Heart left ventricle (tissue), 16 donors: ENCODE measurements at regions of chrX and their contacts with region 1.

Region 1: GRCh38 chrX:2342874-2343273 is 157.9 kb downstream of the DHRSX start:
- DNase-seq: no peak
- ATAC-seq: peak in 2 of 4 donors; percentile 8 to 14
- H3K4me3 ChIP-seq: no peak overlapping the region
- H3K27ac ChIP-seq: peak overlapping the region; percentile 60 to 95 (median 81)
- H3K4me1 ChIP-seq: peaks cover 0 to 23% (median 8%) of the 10 kb centered on the region in 12 donors
- H3K27me3 ChIP-seq: no peaks in the 10 kb centered on the region
- CTCF ChIP-seq: no peak
- POLR2A ChIP-seq: no peak

Region 2: GRCh38 chrX:1598021-1598873 is 744.6 kb before region 1 on chrX:
- intact Hi-C with region 1: no loop called
- DNase-seq: no peak
- ATAC-seq: peak in 2 of 4 donors; percentile 15 to 34
- H3K4me3 ChIP-seq: peak overlapping the region in 1 of 12 donors; percentile 5
- H3K27ac ChIP-seq: no peak overlapping the region
- H3K4me1 ChIP-seq: peaks cover 0 to 16% (median 11%) of the 10 kb centered on the region in 12 donors
- H3K27me3 ChIP-seq: no peaks in the 10 kb centered on the region
- CTCF ChIP-seq: no peak
- POLR2A ChIP-seq: no peak

Region 3: GRCh38 chrX:2162695-2163094 is 180.2 kb before region 1 on chrX:
- intact Hi-C with region 1: no loop called
- DNase-seq: no peak
- ATAC-seq: no peak
- H3K4me3 ChIP-seq: no peak overlapping the region
- H3K27ac ChIP-seq: no peak overlapping the region
- H3K4me1 ChIP-seq: no peaks in the 10 kb centered on the region
- H3K27me3 ChIP-seq: no peaks in the 10 kb centered on the region
- CTCF ChIP-seq: no peak
- POLR2A ChIP-seq: no peak

Region 4: GRCh38 chrX:2283111-2284067 is 59.5 kb before region 1 on chrX:
- intact Hi-C with region 1: no loop called
- DNase-seq: no peak
- ATAC-seq: no peak
- H3K4me3 ChIP-seq: no peak overlapping the region
- H3K27ac ChIP-seq: no peak overlapping the region
- H3K4me1 ChIP-seq: no peaks in the 10 kb centered on the region
- H3K27me3 ChIP-seq: no peaks in the 10 kb centered on the region
- CTCF ChIP-seq: no peak
- POLR2A ChIP-seq: no peak

Region 5: DNA sequence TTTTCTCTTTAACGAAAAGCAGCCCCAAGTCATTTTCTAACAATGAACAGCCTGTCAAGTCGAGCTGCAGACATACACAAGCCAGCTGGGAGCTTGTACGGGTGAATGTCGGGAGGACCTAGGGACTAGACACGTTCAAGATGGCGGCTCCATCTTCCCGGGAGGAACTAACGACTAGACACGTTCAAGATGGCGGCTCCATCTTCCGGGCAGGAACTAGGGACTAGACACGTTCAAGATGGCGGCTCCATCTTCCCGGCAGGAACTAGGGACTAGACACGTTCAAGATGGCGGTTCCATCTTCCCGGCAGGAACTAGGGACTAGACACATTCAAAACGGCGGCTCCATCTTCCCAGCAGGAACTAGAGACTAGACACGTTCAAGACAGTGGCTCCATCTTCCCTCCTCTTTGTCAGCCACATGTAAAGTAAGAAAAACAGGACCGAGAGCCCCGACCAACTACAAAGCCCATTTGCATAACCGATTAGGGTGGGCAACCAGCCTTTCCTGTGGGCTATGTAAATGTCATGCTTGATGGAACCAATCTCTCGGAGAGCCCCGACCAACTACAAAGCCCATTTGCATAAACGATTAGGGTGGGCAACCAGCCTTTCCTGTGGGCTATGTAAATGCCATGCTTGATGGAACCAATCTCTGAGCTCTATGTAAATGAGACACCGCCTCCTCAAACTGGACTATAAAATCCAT is 17.6 kb before region 1 on chrX:
- intact Hi-C with region 1: loop called in 2 of 10 experiments (anchors 1 to 2 kb)
- DNase-seq: peak; percentile 32 to 91 (median 64)
- ATAC-seq: peak; percentile 28 to 65 (median 49)
- H3K4me3 ChIP-seq: peak overlapping the region in 11 of 12 donors; percentile 10 to 58 (median 36)
- H3K27ac ChIP-seq: peak overlapping the region in 8 of 12 donors; percentile 1 to 84 (median 53)
- H3K4me1 ChIP-seq: peaks cover 0 to 14% (median 0%) of the 10 kb centered on the region in 12 donors
- H3K27me3 ChIP-seq: no peaks in the 10 kb centered on the region
- CTCF ChIP-seq: no peak
- POLR2A ChIP-seq: no peak

Region 6: DNA sequence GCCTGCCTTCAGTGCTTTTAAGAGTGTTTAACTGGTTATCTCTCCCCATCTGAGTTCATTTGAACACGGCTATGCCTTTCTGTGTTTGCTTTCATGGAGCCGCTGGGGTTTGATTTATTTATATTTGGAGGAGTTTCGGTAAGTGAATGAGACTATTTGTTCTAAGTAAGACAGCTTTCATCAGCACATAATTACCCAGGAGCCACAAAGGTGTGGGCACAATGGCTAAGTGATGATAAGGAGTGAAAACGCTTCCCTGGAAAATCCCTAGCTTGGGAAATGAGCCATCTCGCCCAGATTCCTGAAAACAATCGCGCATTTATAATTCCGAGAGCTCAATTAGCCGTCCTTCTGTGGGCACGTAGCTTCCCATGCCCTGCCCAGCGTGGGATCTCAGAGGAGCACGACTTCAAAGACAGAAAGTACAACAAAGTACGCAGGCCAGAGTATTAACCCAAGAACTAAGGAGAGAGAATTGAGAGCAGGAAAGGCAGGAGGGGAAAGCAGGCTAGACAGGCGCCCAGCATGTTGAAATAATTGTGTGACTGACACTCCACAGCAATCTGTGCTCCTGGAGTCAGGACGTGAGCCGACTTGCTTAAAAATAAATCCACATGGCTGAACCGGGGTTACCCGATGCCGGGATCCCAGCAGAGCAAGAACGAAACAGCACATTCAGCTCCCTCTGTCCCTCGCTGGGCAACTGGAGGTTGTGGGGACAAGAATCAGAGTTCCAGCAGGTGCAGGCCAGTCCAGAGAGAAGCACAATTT is 58.9 kb after region 1 on chrX:
- intact Hi-C with region 1: loop called in 1 of 10 experiments (anchors 1 kb)
- DNase-seq: peak in 3 of 5 donors; percentile 18 to 64 (median 43)
- ATAC-seq: peak; percentile 84 to 92 (median 90)
- H3K4me3 ChIP-seq: peak overlapping the region in 3 of 12 donors; percentile 5 to 30 (median 7)
- H3K27ac ChIP-seq: peak overlapping the region; percentile 12 to 82 (median 66)
- H3K4me1 ChIP-seq: peaks cover 0 to 16% (median 0%) of the 10 kb centered on the region in 12 donors
- H3K27me3 ChIP-seq: no peaks in the 10 kb centered on the region
- CTCF ChIP-seq: no peak
- POLR2A ChIP-seq: no peak